B cell (primary cell): ENCODE measurements at regions of chr1 and their contacts with region 1.

Region 1: DNA sequence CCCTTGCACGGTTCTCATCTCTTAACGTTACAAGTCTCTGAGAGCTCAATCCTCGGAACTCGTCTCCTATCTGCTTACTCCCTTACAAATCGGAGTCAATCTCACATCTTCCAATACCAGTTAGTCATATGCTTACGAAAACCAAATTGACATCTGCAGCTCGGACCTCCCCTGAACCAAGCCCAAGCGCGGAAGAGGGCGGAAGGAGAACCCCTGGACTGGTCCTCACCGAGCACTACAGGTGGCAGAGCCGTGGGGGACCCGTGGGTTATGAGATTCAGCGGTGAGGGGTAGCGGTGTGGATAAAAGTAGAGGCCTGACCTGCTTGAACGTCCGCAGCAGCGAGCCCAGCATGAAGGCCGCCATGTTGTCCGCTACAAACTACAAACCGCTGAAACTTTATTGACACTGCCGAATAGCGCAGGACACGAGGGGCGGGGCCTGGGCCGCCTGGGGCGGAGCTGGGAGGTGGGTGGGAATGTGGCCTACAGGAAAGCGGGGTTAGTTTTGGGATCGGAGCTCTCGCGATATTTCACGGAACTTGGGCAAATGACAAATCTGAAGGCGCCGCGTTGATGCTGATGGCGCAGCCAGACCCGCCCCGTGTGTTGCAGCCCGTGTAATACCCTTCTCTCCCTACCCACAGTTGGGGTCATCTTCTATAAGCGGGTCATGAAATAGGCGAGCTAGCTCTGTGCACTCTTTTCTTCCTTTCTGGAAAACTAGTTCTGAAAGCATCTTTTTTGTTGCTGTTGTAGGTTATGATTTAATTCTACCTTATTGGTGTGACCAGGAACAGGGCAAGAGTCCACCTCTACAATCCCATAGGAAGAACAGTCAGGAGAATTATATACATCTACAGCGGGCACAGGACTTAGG is at the start of gene MRPS14:
- DNase-seq: peak; percentile 99
- ATAC-seq: peak; percentile 95
- H3K4me3 ChIP-seq: peak within 1 kb of the TSS; percentile 91 to 99 (median 95)
- H3K4me3 Mint-ChIP-seq: peak within 1 kb of the TSS; percentile 95
- H3K27ac ChIP-seq: peak within 1 kb of the TSS; percentile 84 to 87
- H3K27ac Mint-ChIP-seq: peak within 1 kb of the TSS; percentile 92
- H3K4me1 ChIP-seq: peaks cover 10 to 15% of the 10 kb centered on the region in 2 donors
- H3K4me1 Mint-ChIP-seq: peaks cover 28% of the 10 kb centered on the region
- H3K27me3 ChIP-seq: no peaks in the 10 kb centered on the region
- H3K27me3 Mint-ChIP-seq: no peaks in the 10 kb centered on the region
- CTCF ChIP-seq: no peak
- total RNA-seq, gene MRPS14: 26.5 and 29.4 TPM in 2 replicates

Region 2: DNA sequence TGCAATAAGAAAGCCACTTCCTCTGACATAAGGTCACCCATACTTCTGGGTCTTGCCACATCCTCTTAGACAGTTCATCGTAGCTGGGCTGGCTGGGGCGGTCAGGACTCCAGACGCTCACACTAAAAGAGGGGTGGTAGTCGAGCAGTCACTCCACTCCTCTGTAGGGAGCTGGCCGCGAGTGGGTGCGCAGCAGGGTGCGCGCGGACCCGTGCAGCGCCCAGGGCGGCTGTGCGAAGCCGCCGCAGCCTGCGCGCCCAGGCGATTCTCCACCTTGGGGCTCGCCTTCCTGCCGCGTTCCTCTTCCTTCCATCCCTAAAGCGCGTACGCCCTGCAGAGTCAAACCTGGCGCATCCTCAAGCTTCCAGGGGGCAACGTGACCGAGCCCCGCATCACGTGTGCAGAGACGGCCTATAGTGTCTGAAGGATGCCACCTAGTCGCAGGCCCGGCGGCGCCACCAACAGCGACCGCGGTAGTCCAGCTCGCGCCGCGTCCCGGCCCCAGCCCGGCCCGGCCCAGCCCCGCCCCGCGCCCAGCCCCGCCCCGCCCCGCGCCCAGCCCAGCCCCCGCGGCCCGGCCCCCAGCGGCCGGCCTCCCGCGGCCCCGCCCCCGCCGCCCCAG is 1546.5 kb before region 1 on chr1:
- CTCF ChIA-PET with region 1: no interaction called
- POLR2A ChIA-PET with region 1: no interaction called
- intact Hi-C with region 1: loop called (anchors 2 kb)
- DNase-seq: peak; percentile 92
- ATAC-seq: peak; percentile 92
- H3K4me3 ChIP-seq: peak overlapping the region; percentile 48 to 96 (median 87)
- H3K4me3 Mint-ChIP-seq: peak overlapping the region; percentile 99
- H3K27ac ChIP-seq: peak overlapping the region; percentile 42 to 82
- H3K27ac Mint-ChIP-seq: peak overlapping the region; percentile 99
- H3K4me1 ChIP-seq: peaks cover 22 to 23% of the 10 kb centered on the region in 2 donors
- H3K4me1 Mint-ChIP-seq: peaks cover 42% of the 10 kb centered on the region
- H3K27me3 ChIP-seq: no peaks in the 10 kb centered on the region
- H3K27me3 Mint-ChIP-seq: no peaks in the 10 kb centered on the region
- CTCF ChIP-seq: no peak

Region 3: GRCh38 chr1:174022080-174022975 is 1001.0 kb before region 1 on chr1 and contains the start of gene RC3H1:
- CTCF ChIA-PET with region 1: no interaction called
- POLR2A ChIA-PET with region 1: no interaction called
- intact Hi-C with region 1: loop called (anchors 2 kb)
- DNase-seq: peak; percentile 93
- ATAC-seq: peak; percentile 95
- H3K4me3 ChIP-seq: peak within 1 kb of the TSS; percentile 73 to 94 (median 91)
- H3K4me3 Mint-ChIP-seq: peak within 1 kb of the TSS; percentile 95
- H3K27ac ChIP-seq: peak within 1 kb of the TSS; percentile 76 to 93
- H3K27ac Mint-ChIP-seq: peak within 1 kb of the TSS; percentile 96
- H3K4me1 ChIP-seq: peaks cover 30 to 36% of the 10 kb centered on the region in 2 donors
- H3K4me1 Mint-ChIP-seq: peaks cover 41% of the 10 kb centered on the region
- H3K27me3 ChIP-seq: no peaks in the 10 kb centered on the region
- H3K27me3 Mint-ChIP-seq: no peaks in the 10 kb centered on the region
- CTCF ChIP-seq: no peak
- total RNA-seq, gene RC3H1: 84.4 and 84.5 TPM in 2 replicates

Region 4: DNA sequence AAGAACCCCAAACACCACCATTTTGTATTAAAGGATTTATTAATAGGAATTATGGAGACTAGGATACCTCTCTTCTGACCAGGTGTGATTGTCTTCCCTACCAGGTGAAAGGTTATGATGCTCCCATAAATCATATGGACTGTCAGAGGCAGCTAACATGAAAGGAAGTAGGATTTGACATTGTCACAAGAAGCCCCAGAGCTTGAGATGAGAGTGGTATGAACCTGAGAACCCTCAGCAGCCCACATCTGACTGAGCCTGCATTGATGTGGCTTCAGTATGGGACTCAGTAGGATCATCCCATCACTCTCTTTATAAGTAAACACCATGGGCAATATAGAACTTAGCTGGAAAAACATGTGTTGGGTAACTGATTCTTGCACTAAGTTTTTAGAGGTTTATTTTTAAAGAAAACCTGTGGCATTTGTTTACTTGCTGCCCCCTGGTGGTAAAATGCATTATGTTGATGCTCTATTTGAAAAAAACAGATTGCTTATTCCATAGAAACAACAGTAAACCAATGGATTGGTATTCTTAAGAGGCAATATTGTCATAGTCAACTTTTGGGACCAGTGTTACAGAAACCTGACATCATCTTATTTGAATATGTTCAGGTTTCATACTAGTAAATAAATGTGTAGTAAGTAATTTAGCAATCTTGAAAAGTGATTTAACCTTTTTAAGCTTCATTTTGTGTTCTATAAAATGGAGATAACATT is 40.2 kb before region 1 on chr1:
- CTCF ChIA-PET with region 1: no interaction called
- POLR2A ChIA-PET with region 1: no interaction called
- intact Hi-C with region 1: no loop called
- DNase-seq: peak; percentile 67
- ATAC-seq: peak; percentile 24
- H3K4me3 ChIP-seq: no peak overlapping the region
- H3K4me3 Mint-ChIP-seq: no peak overlapping the region
- H3K27ac ChIP-seq: no peak overlapping the region
- H3K27ac Mint-ChIP-seq: peak overlapping the region; percentile 17
- H3K4me1 ChIP-seq: no peaks in the 10 kb centered on the region
- H3K4me1 Mint-ChIP-seq: peaks cover 4% of the 10 kb centered on the region
- H3K27me3 ChIP-seq: no peaks in the 10 kb centered on the region
- H3K27me3 Mint-ChIP-seq: no peaks in the 10 kb centered on the region
- CTCF ChIP-seq: peak; percentile 81

Region 5: DNA sequence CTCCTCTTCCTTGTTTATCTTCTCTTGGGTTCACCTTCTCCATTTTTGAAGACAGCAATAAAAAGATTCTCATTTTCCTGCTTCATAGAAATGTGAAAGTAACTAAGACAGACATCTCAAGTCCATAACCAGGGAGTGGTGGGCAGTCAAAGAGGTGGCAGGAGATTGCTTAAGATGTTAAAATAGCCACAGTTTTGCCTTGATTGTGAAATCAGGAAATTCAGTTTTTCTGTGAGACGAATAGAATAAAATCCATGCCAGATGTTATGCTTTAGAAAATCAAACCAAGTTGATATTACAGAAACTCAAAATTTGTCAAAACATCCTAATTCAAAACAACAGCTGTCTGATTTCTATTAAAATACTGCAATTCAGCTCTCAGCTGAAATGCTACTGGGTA is 101.6 kb after region 1 on chr1:
- CTCF ChIA-PET with region 1: interaction called, 104 read pairs
- POLR2A ChIA-PET with region 1: no interaction called
- intact Hi-C with region 1: no loop called
- DNase-seq: no peak
- ATAC-seq: no peak
- H3K4me3 ChIP-seq: no peak overlapping the region
- H3K4me3 Mint-ChIP-seq: no peak overlapping the region
- H3K27ac ChIP-seq: no peak overlapping the region
- H3K27ac Mint-ChIP-seq: no peak overlapping the region
- H3K4me1 ChIP-seq: no peaks in the 10 kb centered on the region
- H3K4me1 Mint-ChIP-seq: no peaks in the 10 kb centered on the region
- H3K27me3 ChIP-seq: no peaks in the 10 kb centered on the region
- H3K27me3 Mint-ChIP-seq: peaks cover 6% of the 10 kb centered on the region
- CTCF ChIP-seq: no peak

Region 6: DNA sequence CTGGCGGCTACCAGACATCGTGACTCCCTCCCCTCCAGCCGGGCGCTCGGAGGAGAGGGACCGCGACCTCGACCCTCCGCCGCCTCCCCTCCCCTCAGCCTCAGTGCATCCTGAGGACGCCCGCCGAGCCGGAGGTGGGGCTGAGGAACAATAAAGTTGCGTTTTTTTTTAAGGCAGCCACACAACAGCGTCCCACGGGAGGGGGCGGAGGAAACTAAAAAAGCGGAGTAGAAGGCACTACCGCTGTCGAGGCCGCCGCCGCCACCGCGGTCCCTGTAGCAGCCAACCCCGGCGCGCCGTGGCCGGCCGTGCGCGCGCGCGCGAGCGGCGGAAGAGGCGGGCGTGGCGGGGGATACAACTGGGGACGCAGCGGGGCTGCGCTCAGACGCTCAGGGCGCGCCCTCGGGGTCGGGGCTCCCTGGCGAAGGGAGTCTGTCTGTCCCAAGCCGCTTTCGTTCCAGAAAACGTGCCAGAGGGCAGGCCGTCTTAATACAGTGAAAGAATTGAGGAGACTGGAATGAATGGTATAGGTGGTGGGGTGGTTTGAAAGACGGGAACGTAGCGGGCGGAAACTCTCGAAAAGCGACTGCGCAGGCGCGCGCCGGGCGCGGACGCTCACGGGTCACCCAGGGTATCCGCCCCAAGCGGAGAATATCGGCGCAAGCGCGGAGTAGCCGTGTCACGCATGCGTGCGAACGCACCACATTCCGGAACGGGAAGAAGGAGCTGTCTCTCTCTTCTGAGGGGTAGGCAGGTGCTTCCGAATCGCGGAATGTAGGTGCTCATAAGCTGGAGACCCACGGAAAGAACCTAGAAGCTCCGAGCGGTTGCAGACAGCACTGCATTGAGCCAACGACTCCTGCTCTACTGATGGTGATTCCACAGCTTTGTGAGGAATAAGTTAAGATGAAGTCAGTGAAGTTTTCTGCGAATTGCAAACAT is 1184.0 kb after region 1 on chr1 and contains the start of gene COP1:
- CTCF ChIA-PET with region 1: no interaction called
- POLR2A ChIA-PET with region 1: no interaction called
- intact Hi-C with region 1: loop called (anchors 10 kb)
- DNase-seq: peak; percentile 99
- ATAC-seq: peak; percentile 84
- H3K4me3 ChIP-seq: peak within 1 kb of the TSS; percentile 92 to 97 (median 94)
- H3K4me3 Mint-ChIP-seq: peak within 1 kb of the TSS; percentile 95
- H3K27ac ChIP-seq: peak within 1 kb of the TSS; percentile 93 to 94
- H3K27ac Mint-ChIP-seq: peak within 1 kb of the TSS; percentile 100
- H3K4me1 ChIP-seq: peaks cover 35 to 42% of the 10 kb centered on the region in 2 donors
- H3K4me1 Mint-ChIP-seq: peaks cover 47% of the 10 kb centered on the region
- H3K27me3 ChIP-seq: no peaks in the 10 kb centered on the region
- H3K27me3 Mint-ChIP-seq: no peaks in the 10 kb centered on the region
- CTCF ChIP-seq: peak; percentile 35
- total RNA-seq, gene COP1: 68.5 and 71.8 TPM in 2 replicates